CD4-positive, alpha-beta memory T cell (primary cell): ENCODE measurements at regions of chr7 and their contacts with region 1.

Region 1: DNA sequence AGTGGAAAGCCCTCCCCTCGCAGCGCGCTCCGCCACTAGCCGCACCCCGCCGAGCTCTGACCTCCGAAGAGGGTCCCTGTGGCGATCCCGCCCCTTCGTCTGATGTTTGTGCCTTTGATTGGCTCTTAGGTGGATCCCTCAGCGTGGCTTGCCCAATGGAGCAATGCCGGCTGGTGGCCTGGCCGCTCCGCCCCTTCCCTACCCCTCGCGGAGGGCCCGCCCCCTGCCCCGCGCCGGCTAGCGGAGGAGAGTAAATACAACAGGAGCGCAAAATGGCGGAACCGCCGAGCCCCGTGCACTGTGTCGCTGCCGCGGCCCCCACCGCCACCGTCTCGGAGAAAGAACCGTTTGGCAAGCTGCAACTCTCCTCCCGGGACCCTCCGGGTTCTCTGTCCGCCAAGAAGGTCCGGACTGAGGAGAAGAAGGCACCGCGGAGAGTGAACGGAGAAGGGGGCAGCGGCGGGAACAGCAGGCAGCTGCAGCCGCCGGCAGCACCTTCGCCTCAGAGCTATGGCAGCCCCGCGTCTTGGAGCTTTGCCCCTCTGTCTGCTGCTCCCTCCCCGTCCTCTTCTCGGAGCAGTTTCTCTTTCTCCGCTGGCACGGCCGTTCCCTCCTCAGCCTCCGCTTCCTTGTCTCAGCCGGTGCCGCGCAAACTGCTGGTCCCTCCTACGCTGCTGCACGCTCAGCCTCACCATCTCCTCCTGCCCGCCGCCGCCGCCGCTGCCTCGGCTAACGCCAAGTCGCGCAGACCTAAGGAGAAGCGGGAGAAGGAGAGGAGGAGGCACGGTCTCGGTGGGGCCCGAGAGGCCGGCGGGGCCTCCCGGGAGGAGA is at the start of gene RSBN1L:
- DNase-seq: peak; percentile 98 to 99 (median 98)
- H3K4me3 ChIP-seq: peak within 1 kb of the TSS; percentile 74 to 99
- H3K4me3 Mint-ChIP-seq: peak within 1 kb of the TSS; percentile 91 to 99 (median 98)
- H3K27ac ChIP-seq: peak within 1 kb of the TSS; percentile 89
- H3K27ac Mint-ChIP-seq: peak within 1 kb of the TSS; percentile 87 to 99 (median 97)
- H3K4me1 ChIP-seq: peaks cover 49% of the 10 kb centered on the region
- H3K4me1 Mint-ChIP-seq: peaks cover 37 to 71% (median 56%) of the 10 kb centered on the region in 4 donors
- H3K27me3 ChIP-seq: no peaks in the 10 kb centered on the region
- H3K27me3 Mint-ChIP-seq: no peaks in the 10 kb centered on the region
- total RNA-seq, gene RSBN1L: 45.0 to 51.0 TPM

Region 2: DNA sequence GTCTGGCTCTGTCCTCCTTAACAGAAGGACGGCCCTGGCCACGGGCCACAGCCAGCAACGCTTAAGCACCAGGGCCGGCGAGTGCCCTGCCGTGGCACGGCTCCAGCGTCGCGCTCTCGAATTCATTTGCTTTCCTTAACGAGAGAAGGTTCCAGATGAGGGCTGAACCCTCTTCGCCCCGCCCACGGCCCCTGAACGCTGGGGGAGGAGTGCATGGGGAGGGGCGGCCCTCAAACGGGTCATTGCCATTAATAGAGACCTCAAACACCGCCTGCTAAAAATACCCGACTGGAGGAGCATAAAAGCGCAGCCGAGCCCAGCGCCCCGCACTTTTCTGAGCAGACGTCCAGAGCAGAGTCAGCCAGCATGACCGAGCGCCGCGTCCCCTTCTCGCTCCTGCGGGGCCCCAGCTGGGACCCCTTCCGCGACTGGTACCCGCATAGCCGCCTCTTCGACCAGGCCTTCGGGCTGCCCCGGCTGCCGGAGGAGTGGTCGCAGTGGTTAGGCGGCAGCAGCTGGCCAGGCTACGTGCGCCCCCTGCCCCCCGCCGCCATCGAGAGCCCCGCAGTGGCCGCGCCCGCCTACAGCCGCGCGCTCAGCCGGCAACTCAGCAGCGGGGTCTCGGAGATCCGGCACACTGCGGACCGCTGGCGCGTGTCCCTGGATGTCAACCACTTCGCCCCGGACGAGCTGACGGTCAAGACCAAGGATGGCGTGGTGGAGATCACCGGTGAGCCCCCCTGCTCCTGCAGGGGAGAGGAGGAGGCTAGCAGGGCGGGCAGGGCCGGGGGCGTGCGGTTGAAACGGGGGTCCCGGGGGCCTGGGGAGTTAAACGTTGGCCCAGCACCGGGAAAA is 1393.8 kb before region 1 on chr7 and contains the start of gene HSPB1:
- CTCF ChIA-PET with region 1: no interaction called
- POLR2A ChIA-PET with region 1: no interaction called
- intact Hi-C with region 1: loop called (anchors 5 kb)
- DNase-seq: peak; percentile 61 to 82 (median 65)
- H3K4me3 ChIP-seq: peak within 1 kb of the TSS; percentile 61 to 63
- H3K4me3 Mint-ChIP-seq: peak within 1 kb of the TSS; percentile 90 to 97 (median 92)
- H3K27ac ChIP-seq: peak within 1 kb of the TSS; percentile 62
- H3K27ac Mint-ChIP-seq: peak within 1 kb of the TSS; percentile 88 to 96 (median 93)
- H3K4me1 ChIP-seq: peaks cover 6% of the 10 kb centered on the region
- H3K4me1 Mint-ChIP-seq: peaks cover 11 to 24% (median 15%) of the 10 kb centered on the region in 4 donors
- H3K27me3 ChIP-seq: no peaks in the 10 kb centered on the region
- H3K27me3 Mint-ChIP-seq: no peaks in the 10 kb centered on the region
- total RNA-seq, gene HSPB1: 41.9 to 43.1 TPM

Region 3: GRCh38 chr7:77199013-77199966 is 497.1 kb before region 1 on chr7 and contains the start of gene FGL2:
- CTCF ChIA-PET with region 1: no interaction called
- POLR2A ChIA-PET with region 1: no interaction called
- intact Hi-C with region 1: no loop called
- DNase-seq: peak; percentile 37 to 49 (median 43)
- H3K4me3 ChIP-seq: peak within 1 kb of the TSS; percentile 51 to 67
- H3K4me3 Mint-ChIP-seq: peak within 1 kb of the TSS; percentile 82 to 93 (median 88)
- H3K27ac ChIP-seq: peak within 1 kb of the TSS; percentile 56
- H3K27ac Mint-ChIP-seq: peak within 1 kb of the TSS; percentile 60 to 96 (median 91)
- H3K4me1 ChIP-seq: peaks cover 52% of the 10 kb centered on the region
- H3K4me1 Mint-ChIP-seq: peaks cover 27 to 42% (median 34%) of the 10 kb centered on the region in 4 donors
- H3K27me3 ChIP-seq: no peaks in the 10 kb centered on the region
- H3K27me3 Mint-ChIP-seq: no peaks in the 10 kb centered on the region
- total RNA-seq, gene FGL2: 2.9 to 4.5 TPM

Region 4: DNA sequence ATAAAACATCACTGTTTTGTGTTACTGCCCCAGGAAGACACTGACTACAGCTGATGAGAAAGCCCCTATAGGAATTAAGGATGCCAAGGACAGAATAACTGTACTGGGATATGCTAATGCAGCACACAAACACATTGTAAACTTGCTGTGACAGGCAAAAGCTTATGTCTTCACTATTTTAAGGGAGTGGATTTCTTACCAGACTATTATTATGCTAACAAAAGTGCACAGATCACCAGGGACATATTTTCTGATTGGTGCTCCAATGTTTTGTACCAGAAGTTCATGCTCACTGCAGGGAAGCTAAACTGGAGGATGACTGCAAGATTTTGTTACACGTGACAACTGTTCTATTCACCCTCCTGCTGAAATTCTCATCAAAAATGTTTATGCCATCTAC is 207.4 kb before region 1 on chr7:
- CTCF ChIA-PET with region 1: no interaction called
- POLR2A ChIA-PET with region 1: no interaction called
- intact Hi-C with region 1: no loop called
- DNase-seq: no peak
- H3K4me3 ChIP-seq: no peak overlapping the region
- H3K4me3 Mint-ChIP-seq: no peak overlapping the region
- H3K27ac ChIP-seq: no peak overlapping the region
- H3K27ac Mint-ChIP-seq: no peak overlapping the region
- H3K4me1 ChIP-seq: no peaks in the 10 kb centered on the region
- H3K4me1 Mint-ChIP-seq: peaks cover 0 to 2% (median 0%) of the 10 kb centered on the region in 4 donors
- H3K27me3 ChIP-seq: no peaks in the 10 kb centered on the region
- H3K27me3 Mint-ChIP-seq: peaks cover 2 to 13% of the 10 kb centered on the region in 2 donors

Region 5: DNA sequence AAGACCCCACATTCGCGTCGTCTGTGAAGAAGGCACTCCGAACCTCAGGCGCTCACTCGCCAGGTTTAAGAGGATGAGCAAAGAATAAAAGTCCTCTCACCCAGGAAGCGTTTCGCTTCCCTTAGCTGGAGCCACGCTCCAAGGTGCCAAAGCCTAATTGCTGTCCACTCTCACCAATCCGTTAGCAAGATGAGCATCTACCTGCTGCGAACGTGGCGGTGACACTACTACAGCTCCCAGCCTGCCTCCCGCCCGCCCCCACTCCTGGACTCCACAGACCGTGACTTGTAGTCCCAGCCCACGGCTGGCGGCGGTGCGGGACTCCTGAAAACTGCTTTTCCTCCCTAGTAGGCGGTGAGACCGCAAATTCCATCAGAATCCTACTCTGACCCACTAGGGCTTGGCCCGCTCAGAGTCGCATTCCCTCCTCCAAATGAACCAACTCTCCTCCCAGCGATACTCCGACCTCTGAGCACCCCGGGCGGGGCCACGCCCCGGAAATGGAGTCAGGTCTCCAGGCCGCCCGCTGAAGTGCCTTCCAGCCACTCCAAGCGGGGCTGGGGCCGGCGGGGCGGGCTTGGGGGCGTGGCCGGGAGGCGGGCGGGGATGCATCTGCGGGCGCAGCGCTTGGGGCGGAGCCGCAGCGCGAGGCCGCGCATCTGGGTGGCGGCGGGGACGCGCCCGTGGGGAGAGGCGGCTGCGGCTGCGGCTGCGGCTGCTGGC is 159.8 kb before region 1 on chr7:
- CTCF ChIA-PET with region 1: no interaction called
- POLR2A ChIA-PET with region 1: interaction called, 4 read pairs
- intact Hi-C with region 1: loop called (anchors 1 kb)
- DNase-seq: peak; percentile 93 to 96 (median 94)
- H3K4me3 ChIP-seq: peak overlapping the region; percentile 76 to 95
- H3K4me3 Mint-ChIP-seq: peak overlapping the region; percentile 93 to 98 (median 98)
- H3K27ac ChIP-seq: peak overlapping the region; percentile 77
- H3K27ac Mint-ChIP-seq: peak overlapping the region; percentile 94 to 98 (median 96)
- H3K4me1 ChIP-seq: peaks cover 7% of the 10 kb centered on the region
- H3K4me1 Mint-ChIP-seq: peaks cover 6 to 28% (median 16%) of the 10 kb centered on the region in 4 donors
- H3K27me3 ChIP-seq: no peaks in the 10 kb centered on the region
- H3K27me3 Mint-ChIP-seq: no peaks in the 10 kb centered on the region

Region 6: DNA sequence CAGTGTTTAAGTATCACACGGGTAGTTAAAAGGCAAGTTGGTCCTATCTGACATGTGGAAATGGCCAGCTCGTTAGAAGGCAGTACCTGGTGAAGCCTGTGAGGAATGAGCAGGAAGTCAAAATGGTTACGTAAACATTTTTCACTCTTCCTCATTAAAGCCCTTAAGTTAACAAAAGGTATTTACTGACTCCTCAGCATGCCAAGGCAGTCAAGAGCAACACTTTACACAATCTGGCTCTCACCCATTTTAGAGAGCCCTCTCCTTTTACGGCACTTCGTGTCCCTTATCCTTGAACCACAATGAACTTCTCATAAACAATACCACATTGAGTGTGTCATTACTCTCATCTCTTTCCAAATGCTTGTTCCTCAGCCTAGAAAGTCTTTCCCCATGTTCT is 11.2 kb before region 1 on chr7:
- CTCF ChIA-PET with region 1: interaction called, 18 read pairs
- POLR2A ChIA-PET with region 1: interaction called, 41 read pairs
- intact Hi-C with region 1: loop called (anchors 1 kb)
- DNase-seq: no peak
- H3K4me3 ChIP-seq: no peak overlapping the region
- H3K4me3 Mint-ChIP-seq: no peak overlapping the region
- H3K27ac ChIP-seq: no peak overlapping the region
- H3K27ac Mint-ChIP-seq: peak overlapping the region in 2 of 7 donors; percentile 0 to 35
- H3K4me1 ChIP-seq: peaks cover 21% of the 10 kb centered on the region
- H3K4me1 Mint-ChIP-seq: peaks cover 18 to 32% (median 24%) of the 10 kb centered on the region in 4 donors
- H3K27me3 ChIP-seq: no peaks in the 10 kb centered on the region
- H3K27me3 Mint-ChIP-seq: no peaks in the 10 kb centered on the region

Region 7: DNA sequence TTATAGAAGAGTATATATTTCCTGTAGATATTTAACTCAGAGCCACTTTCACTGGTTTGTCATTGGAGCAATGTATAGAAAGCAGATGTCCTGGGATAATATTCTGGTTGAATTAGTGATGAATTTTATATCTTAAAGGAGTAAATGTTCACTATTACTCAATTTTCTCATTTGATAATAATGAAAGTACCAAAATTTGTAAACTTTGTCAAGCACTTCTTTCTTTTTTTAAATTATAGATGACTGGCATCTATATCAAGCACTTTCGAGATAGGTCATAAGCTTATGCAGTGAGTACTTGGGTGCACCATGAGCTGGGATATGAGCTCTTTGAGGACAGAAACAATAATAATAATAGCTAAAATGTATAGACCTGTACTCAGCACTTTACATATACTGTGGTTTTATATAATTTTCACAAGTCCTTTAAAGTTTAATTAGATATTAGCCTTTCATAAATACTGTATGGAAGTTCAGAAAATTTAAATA is 11.1 kb after region 1 on chr7:
- CTCF ChIA-PET with region 1: interaction called, 5 read pairs
- POLR2A ChIA-PET with region 1: interaction called, 13 read pairs
- intact Hi-C with region 1: no loop called
- DNase-seq: no peak
- H3K4me3 ChIP-seq: no peak overlapping the region
- H3K4me3 Mint-ChIP-seq: no peak overlapping the region
- H3K27ac ChIP-seq: no peak overlapping the region
- H3K27ac Mint-ChIP-seq: no peak overlapping the region
- H3K4me1 ChIP-seq: peaks cover 67% of the 10 kb centered on the region
- H3K4me1 Mint-ChIP-seq: peaks cover 31 to 64% (median 49%) of the 10 kb centered on the region in 4 donors
- H3K27me3 ChIP-seq: no peaks in the 10 kb centered on the region
- H3K27me3 Mint-ChIP-seq: no peaks in the 10 kb centered on the region

Region 8: GRCh38 chr7:77759294-77759889 is 63.0 kb after region 1 on chr7:
- CTCF ChIA-PET with region 1: interaction called, 6 read pairs
- POLR2A ChIA-PET with region 1: interaction called, 4 read pairs
- intact Hi-C with region 1: loop called (anchors 2 kb)
- DNase-seq: peak; percentile 68 to 79 (median 73)
- H3K4me3 ChIP-seq: no peak overlapping the region
- H3K4me3 Mint-ChIP-seq: peak overlapping the region in 1 of 8 donors; percentile 28
- H3K27ac ChIP-seq: no peak overlapping the region
- H3K27ac Mint-ChIP-seq: peak overlapping the region in 6 of 7 donors; percentile 9 to 61 (median 36)
- H3K4me1 ChIP-seq: peaks cover 33% of the 10 kb centered on the region
- H3K4me1 Mint-ChIP-seq: peaks cover 29 to 51% (median 36%) of the 10 kb centered on the region in 4 donors
- H3K27me3 ChIP-seq: no peaks in the 10 kb centered on the region
- H3K27me3 Mint-ChIP-seq: no peaks in the 10 kb centered on the region

Region 9: DNA sequence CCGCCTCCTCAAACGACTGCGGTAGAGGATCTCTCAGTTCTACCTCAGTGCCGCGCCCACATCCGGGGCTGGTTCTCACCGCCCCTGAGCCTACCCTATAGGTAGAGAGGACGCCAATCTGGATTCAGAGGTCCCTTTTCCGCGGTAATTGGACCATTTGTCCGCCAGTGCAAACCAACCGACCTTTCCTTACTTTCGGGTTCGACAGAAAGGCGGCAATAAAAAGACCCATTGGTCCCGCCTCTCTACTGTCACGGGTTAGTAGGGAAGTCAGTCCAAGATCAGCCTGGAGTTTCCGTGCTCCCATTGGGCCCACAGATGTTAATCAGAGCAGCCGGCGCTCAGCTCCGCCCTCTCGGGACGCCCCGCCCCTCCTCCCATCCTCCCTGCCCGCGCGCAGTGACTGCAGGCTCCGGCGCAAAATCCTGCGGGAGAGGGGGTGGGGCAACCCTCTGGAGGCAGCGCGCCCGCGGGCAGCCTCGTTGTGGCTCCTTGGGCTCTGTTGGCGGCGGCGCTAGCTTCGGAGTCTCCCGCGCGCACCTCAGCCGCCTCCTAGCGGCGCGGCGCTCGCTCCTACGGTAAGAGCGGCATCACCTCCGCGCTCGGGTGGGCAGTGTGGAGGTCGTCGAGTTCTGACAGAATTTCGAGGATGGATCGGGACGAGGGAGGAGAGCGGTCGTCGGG is 102.1 kb after region 1 on chr7 and contains the starts of genes PHTF2 and TMEM60:
- CTCF ChIA-PET with region 1: interaction called, 3 read pairs
- POLR2A ChIA-PET with region 1: interaction called, 11 read pairs
- intact Hi-C with region 1: loop called (anchors 1 kb)
- DNase-seq: peak; percentile 93 to 99 (median 96)
- H3K4me3 ChIP-seq: peak within 1 kb of the TSS; percentile 82 to 96
- H3K4me3 Mint-ChIP-seq: peak within 1 kb of the TSS; percentile 93 to 100 (median 96)
- H3K27ac ChIP-seq: peak within 1 kb of the TSS; percentile 80
- H3K27ac Mint-ChIP-seq: peak within 1 kb of the TSS; percentile 91 to 99 (median 95)
- H3K4me1 ChIP-seq: peaks cover 69% of the 10 kb centered on the region
- H3K4me1 Mint-ChIP-seq: peaks cover 53 to 83% (median 75%) of the 10 kb centered on the region in 4 donors
- H3K27me3 ChIP-seq: no peaks in the 10 kb centered on the region
- H3K27me3 Mint-ChIP-seq: no peaks in the 10 kb centered on the region
- total RNA-seq, gene PHTF2: 32.8 to 34.1 TPM
- total RNA-seq, gene TMEM60: 18.2 to 18.3 TPM